Posterior cingulate gyrus (tissue), 11 donors: ENCODE measurements at regions of chr1 and their contacts with region 1.

Region 1: DNA sequence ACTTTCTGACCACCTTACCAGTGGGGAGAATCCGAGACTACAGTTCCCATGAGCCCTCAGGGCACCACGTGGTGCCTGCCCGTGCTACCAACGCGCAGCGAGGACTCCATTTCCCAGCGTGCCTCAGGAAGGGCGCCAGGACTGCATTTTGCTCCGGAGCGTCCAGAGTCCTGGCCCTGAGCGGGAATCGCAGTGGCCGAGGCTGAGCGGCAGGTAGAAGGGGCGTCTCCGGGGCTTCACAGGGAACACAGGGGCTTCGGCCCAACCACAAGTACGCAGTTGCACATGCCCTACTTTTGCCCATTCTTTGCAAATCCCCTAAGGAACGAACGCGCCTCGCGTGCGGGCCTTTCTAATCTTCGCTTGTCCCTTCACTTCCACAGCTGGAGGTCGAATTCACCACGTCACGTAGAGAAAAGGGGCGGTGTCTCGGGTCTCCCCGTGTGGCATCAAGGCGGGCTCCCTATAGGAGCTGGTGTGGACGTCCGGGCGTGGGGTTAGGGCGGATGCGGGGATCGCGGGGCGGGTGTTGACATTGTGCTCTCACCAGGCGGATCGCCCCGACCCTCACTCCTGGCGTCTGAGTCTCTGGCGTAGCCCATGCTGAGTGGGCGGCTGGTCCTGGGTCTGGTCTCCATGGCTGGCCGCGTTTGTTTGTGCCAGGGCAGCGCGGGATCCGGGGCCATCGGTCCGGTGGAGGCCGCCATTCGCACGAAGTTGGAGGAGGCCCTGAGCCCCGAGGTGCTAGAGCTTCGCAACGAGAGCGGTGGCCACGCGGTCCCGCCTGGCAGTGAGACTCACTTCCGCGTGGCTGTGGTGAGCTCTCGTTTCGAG is at the start of gene BOLA1:
- DNase-seq: peak; percentile 92 to 99 (median 96)

Region 2: GRCh38 chr1:149888248-149889222 is 11.1 kb before region 1 on chr1:
- intact Hi-C with region 1: loop called (anchors 1 kb)
- DNase-seq: peak in 9 of 10 donors; percentile 31 to 88 (median 61)

Region 3: GRCh38 chr1:149931212-149931790 is 31.6 kb after region 1 on chr1:
- intact Hi-C with region 1: loop called (anchors 5 kb)
- DNase-seq: peak in 1 of 10 donors; percentile 22

Region 4: DNA sequence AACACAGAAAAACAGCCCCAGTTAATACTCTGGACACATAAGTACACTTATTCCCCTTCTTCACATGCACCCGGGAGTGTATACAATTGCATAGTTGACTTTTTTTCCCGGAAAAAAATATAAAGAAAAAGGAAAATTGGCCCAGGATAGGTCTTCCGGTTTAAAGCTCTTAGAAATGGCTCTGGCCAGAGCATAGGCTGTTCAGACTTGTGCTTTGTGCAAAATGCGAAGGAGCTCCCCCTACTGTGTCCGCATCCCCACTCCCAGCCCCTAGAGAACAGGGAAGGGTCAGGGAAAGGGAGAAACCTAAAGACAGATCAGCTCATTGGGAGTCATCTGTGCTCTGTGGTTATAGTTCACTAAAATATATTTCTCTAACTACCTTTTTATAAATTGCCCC is 42.5 kb after region 1 on chr1:
- intact Hi-C with region 1: no loop called
- DNase-seq: peak in 3 of 10 donors; percentile 31 to 84 (median 42)

Region 5: GRCh38 chr1:150309770-150310508 is 410.3 kb after region 1 on chr1:
- intact Hi-C with region 1: no loop called
- DNase-seq: no peak